PC-3 (cell line): ENCODE measurements at regions of chr1 and their contacts with region 1.

Region 1: GRCh38 chr1:157025856-157026255 is 19.7 kb downstream of the ARHGEF11 start:
- DNase-seq: no peak
- ATAC-seq: no peak
- H3K4me3 ChIP-seq: no peak overlapping the region
- H3K27ac ChIP-seq: no peak overlapping the region
- H3K4me1 ChIP-seq: no peaks in the 10 kb centered on the region
- H3K27me3 ChIP-seq: no peaks in the 10 kb centered on the region
- CTCF ChIP-seq: no peak

Region 2: DNA sequence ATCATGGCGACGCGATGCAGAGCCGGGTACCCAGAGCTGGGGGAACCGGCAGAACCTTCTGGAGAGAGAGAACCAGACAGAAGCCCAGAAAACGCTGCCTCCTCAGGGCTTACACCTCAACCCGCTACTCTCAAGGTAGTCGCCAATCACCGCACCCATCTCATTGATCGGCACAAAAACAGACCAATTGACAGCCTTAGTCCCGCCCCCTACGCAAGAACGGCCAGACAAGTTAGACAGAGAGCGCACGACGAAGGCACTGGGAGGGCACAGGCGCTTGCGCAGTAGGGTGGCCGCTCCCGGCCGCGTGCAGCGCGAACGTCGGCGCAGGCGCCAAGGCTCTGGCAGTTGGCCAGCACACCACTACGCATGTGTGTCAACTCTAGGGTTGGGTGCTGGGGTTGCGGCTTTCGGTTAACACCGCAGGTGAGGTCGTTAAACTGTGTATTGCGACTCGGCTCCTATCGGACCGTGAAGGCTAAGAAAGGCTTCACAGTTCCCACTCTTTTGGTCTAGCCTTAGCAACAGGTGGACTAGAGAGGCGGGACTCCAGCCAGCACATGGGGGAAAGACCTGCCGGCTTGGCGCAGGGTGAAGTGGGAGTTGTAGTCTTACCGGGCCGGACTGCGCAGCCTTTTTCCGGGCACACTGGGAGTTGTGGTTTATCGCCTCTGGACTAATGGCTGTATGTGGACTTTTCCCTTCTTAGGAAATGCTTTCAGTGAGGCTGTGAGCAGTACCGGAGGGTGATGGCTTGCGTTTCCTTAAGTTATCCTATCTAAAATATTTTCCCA is 687.5 kb before region 1 on chr1 and contains the starts of genes CCT3 and TSACC:
- CTCF ChIA-PET with region 1: no interaction called
- POLR2A ChIA-PET with region 1: no interaction called
- intact Hi-C with region 1: no loop called
- DNase-seq: peak; percentile 100
- ATAC-seq: peak; percentile 95
- H3K4me3 ChIP-seq: peak within 1 kb of the TSS; percentile 98
- H3K27ac ChIP-seq: peak within 1 kb of the TSS; percentile 82
- H3K4me1 ChIP-seq: peaks cover 13% of the 10 kb centered on the region
- H3K27me3 ChIP-seq: no peaks in the 10 kb centered on the region
- CTCF ChIP-seq: no peak
- total RNA-seq, gene CCT3: 666 and 692 TPM in 2 replicates
- total RNA-seq, gene TSACC: 0.51 and 1.3 TPM in 2 replicates

Region 3: GRCh38 chr1:156961709-156962108 is 64.1 kb before region 1 on chr1:
- CTCF ChIA-PET with region 1: no interaction called
- POLR2A ChIA-PET with region 1: no interaction called
- intact Hi-C with region 1: no loop called
- DNase-seq: peak; percentile 44
- ATAC-seq: peak; percentile 62
- H3K4me3 ChIP-seq: no peak overlapping the region
- H3K27ac ChIP-seq: no peak overlapping the region
- H3K4me1 ChIP-seq: peaks cover 16% of the 10 kb centered on the region; the same call in 1 of the 2 replicates
- H3K27me3 ChIP-seq: no peaks in the 10 kb centered on the region
- CTCF ChIP-seq: peak; percentile 78

Region 4: DNA sequence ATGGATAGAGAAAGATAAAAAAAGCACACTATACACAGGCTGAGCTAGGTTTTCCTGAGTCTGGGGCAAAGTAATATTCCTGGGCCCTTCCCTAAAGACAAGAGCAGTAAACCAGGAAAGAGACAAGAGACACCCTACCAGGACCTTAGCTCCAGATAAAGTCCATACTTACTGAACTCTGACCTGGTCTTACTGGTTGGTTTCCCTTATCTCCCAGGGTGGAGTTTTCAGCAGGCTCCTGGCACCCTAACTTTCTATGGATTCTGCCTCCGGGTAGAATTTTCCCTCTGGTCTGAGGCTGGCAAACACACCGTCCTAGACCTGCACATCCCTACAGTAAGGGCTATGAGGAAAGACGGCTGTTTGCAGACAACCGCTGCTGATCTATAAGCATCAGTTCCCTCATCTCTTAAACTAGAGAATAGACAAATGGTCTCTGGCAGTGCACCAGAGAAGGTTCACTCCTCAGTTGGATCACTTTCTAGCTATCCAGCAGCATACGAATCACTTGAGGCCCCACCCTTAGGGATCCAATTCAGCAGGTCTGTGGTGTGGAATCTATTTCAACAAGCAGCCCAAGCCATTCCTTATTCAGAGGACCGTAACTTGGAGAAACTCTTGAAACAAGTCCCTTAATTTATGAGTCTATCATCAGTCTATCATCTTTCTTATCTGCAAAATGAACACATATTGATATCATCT is 32.3 kb before region 1 on chr1:
- CTCF ChIA-PET with region 1: no interaction called
- POLR2A ChIA-PET with region 1: no interaction called
- intact Hi-C with region 1: no loop called
- DNase-seq: peak; percentile 26
- ATAC-seq: peak; percentile 58
- H3K4me3 ChIP-seq: no peak overlapping the region
- H3K27ac ChIP-seq: no peak overlapping the region
- H3K4me1 ChIP-seq: peaks cover 6% of the 10 kb centered on the region; the same call in 1 of the 2 replicates
- H3K27me3 ChIP-seq: no peaks in the 10 kb centered on the region
- CTCF ChIP-seq: no peak

Region 5: GRCh38 chr1:157095551-157095950 is 69.7 kb after region 1 on chr1:
- CTCF ChIA-PET with region 1: no interaction called
- POLR2A ChIA-PET with region 1: interaction called, 14 read pairs
- intact Hi-C with region 1: no loop called
- DNase-seq: no peak
- ATAC-seq: no peak
- H3K4me3 ChIP-seq: no peak overlapping the region
- H3K27ac ChIP-seq: no peak overlapping the region
- H3K4me1 ChIP-seq: no peaks in the 10 kb centered on the region
- H3K27me3 ChIP-seq: no peaks in the 10 kb centered on the region
- CTCF ChIP-seq: no peak